Dendritic cell treated with granulocyte-macrophage colony-stimulating factor and Interleukin-4, amounts not matched to agents 40 ng/mL and 50 ng/mL, for 4 days (primary cell): ENCODE measurements at regions of chr6 and their contacts with region 1.

Region 1: GRCh38 chr6:38012573-38012972 is 193.0 kb downstream of the ZFAND3 start:
- H3K4me3 Mint-ChIP-seq: no peak overlapping the region
- H3K27ac Mint-ChIP-seq: no peak overlapping the region
- H3K4me1 Mint-ChIP-seq: peaks cover 12% of the 10 kb centered on the region
- H3K27me3 Mint-ChIP-seq: no peaks in the 10 kb centered on the region

Region 2: DNA sequence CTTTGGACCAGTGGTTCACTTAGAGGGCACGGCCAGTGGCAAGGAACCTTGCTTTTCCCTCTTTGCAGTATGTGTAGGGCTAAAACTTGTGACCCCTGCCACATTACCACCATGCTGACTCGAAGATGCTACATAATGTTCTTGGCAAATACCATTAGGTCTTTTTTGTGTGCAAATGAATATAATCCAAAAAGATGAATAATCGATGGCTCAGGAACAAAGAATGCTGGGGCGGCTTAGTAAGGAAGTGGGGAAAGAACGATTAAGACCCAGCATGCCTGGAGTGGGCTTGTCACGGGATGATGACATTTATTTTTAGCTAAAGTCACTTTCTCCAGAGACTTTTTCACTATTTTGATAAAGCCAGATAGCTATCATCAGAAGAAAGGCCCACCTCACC is 556.4 kb before region 1 on chr6:
- intact Hi-C with region 1: no loop called
- H3K4me3 Mint-ChIP-seq: no peak overlapping the region
- H3K27ac Mint-ChIP-seq: no peak overlapping the region
- H3K4me1 Mint-ChIP-seq: peaks cover 7% of the 10 kb centered on the region
- H3K27me3 Mint-ChIP-seq: no peaks in the 10 kb centered on the region

Region 3: DNA sequence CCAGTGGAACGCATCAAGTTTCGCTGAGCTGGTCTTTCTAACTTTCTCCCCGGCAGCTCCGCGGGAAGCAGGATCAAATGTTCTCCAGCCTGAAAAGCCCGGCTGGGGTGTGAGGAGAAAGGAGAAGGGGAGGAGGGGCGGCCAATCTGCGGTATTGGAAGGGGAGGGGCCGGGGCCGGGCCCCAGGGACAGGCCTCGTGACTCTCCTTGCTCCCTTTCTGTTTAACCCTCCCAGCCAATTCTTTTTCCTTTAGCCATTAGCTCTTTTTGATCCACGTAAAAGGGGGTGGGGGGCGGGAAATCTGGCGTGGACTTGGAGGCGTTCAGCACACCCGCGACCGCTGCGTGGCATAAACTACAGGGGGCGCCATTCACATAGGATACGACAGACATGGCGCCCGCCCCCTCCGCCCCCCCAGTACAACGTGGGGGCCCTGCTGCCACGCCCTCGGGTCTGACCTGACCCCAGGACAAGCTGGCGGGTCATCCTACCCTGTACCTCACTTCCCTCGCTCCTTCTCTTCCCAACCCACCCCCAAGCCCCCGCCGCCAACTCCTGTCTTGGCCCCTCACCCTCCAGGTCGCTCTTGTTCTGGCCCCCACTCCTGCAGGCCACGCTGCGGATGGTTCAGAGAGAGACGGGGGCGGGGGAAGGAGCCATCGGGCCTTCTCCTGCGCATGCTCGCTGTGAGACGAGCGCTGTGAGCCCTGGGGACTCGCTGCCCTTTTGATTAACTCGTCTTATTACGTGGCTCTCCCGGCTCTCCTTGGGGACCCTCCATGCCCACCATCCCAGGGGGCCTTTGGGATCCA is 307.1 kb before region 1 on chr6:
- intact Hi-C with region 1: loop called (anchors 10 kb)
- H3K4me3 Mint-ChIP-seq: peak overlapping the region; percentile 67
- H3K27ac Mint-ChIP-seq: peak overlapping the region; percentile 30
- H3K4me1 Mint-ChIP-seq: peaks cover 44% of the 10 kb centered on the region
- H3K27me3 Mint-ChIP-seq: peaks cover 71% of the 10 kb centered on the region

Region 4: DNA sequence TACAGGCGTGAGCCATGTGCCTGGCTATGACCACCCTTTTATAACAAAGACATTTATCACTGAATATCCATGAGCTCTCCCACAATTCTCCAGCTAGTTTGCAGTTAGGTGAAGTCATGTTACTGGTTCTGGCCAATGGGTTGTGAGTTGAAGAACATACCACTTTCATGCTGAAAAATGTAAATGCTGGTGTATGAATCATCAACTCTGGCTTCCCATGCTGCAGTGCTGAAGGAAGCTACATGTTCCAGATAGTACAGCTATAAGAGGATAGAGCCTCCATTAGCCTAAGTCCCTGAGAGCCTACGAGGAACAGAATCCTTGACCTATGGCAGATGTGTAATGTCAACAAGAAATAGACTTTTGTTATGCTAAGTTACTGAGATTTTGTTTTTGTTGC is 446.7 kb after region 1 on chr6:
- intact Hi-C with region 1: no loop called
- H3K4me3 Mint-ChIP-seq: no peak overlapping the region
- H3K27ac Mint-ChIP-seq: no peak overlapping the region
- H3K4me1 Mint-ChIP-seq: peaks cover 14% of the 10 kb centered on the region
- H3K27me3 Mint-ChIP-seq: peaks cover 2% of the 10 kb centered on the region